Head of caudate nucleus (tissue), 42 donors: ENCODE measurements at regions of chr11 and their contacts with region 1.

Region 1: GRCh38 chr11:118359295-118359958 is at the start of gene UBE4A:
- DNase-seq: peak; percentile 88 to 99 (median 96)

Region 2: GRCh38 chr11:118145285-118146227 is 213.9 kb before region 1 on chr11:
- intact Hi-C with region 1: loop called (anchors 10 kb)
- DNase-seq: peak; percentile 67 to 93 (median 84)

Region 3: DNA sequence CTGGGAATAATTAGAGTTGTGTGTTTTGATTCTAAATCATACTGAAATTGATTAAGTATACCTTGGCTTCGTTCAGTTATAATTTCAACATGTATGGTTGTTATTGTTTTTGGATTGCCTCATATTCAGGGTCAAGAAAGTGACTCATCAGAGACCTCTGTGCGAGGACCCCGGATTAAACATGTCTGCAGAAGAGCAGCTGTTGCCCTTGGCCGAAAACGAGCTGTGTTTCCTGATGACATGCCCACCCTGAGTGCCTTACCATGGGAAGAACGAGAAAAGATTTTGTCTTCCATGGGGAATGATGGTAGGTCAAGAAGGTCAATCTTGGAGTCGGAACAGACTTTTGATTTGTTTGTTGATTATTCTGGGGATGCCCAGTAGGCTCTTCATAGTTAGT is 117.2 kb after region 1 on chr11:
- intact Hi-C with region 1: no loop called
- DNase-seq: no peak

Region 4: GRCh38 chr11:118488480-118489109 is 129.2 kb after region 1 on chr11:
- intact Hi-C with region 1: no loop called
- DNase-seq: peak; percentile 22 to 87 (median 66)